ENCODE measurements at regions of chr10 and their contacts with region 1.

Region 1: GRCh38 chr10:100562008-100562711 is 26.4 kb downstream of the HIF1AN start:
- H3K4me3 ChIP-seq: no peak overlapping the region
- H3K27ac ChIP-seq: no peak overlapping the region
- H3K4me1 ChIP-seq: no peaks in the 10 kb centered on the region
- CTCF ChIP-seq: peak; percentile 96

Region 2: DNA sequence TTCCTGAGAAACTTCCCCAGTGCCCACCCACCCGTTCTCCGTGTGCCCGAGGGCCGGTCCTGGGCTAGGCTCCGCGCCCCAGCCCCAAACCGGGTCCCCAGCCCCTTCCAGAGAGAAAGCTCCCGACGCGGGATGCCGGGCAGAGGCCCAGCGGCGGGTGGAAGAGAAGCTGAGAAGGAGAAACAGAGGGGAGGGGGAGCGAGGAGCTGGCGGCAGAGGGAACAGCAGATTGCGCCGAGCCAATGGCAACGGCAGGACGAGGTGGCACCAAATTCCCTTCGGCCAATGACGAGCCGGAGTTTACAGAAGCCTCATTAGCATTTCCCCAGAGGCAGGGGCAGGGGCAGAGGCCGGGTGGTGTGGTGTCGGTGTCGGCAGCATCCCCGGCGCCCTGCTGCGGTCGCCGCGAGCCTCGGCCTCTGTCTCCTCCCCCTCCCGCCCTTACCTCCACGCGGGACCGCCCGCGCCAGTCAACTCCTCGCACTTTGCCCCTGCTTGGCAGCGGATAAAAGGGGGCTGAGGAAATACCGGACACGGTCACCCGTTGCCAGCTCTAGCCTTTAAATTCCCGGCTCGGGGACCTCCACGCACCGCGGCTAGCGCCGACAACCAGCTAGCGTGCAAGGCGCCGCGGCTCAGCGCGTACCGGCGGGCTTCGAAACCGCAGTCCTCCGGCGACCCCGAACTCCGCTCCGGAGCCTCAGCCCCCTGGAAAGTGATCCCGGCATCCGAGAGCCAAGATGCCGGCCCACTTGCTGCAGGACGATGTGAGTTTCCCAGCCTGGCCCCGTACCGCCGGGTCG is 215.2 kb before region 1 on chr10 and contains the start of gene SCD:
- CTCF ChIA-PET with region 1: no interaction called
- POLR2A ChIA-PET with region 1: no interaction called
- H3K4me3 ChIP-seq: peak within 1 kb of the TSS; percentile 77
- H3K27ac ChIP-seq: peak within 1 kb of the TSS; percentile 99
- H3K4me1 ChIP-seq: peaks cover 21% of the 10 kb centered on the region
- CTCF ChIP-seq: no peak

Region 3: DNA sequence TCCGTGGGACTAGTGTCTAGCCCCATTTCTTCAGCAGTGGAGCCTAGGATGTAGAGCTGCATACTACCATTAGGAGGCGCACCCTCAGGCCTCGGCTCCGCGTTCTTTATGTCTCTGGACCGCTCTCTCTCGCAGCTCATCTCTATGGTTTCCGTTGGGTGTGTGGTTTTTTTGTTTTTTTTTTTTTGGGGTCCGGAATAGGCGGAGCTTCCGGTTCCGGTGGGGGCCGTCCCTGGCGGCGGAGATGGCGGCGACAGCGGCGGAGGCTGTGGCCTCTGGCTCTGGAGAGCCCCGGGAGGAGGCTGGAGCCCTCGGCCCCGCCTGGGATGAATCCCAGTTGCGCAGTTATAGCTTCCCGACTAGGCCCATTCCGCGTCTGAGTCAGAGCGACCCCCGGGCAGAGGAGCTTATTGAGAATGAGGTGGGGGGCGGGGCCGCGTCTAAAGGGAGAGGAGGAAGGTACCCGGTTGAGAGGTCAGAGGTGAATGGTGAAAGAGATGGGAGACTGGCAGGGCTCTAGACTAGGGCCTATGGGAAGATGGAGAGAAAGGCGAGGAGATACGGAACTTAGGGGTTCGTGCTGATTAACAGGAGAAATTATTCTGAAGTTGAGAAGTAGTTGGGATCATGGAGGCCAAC is 26.3 kb before region 1 on chr10 and contains the start of gene HIF1AN:
- CTCF ChIA-PET with region 1: interaction called, 16 read pairs
- POLR2A ChIA-PET with region 1: interaction called, 5 read pairs
- H3K4me3 ChIP-seq: peak within 1 kb of the TSS; percentile 79
- H3K27ac ChIP-seq: peak within 1 kb of the TSS; percentile 21; the same call in 1 of the 2 replicates
- H3K4me1 ChIP-seq: peaks cover 15% of the 10 kb centered on the region
- CTCF ChIP-seq: peak; percentile 99

Region 4: DNA sequence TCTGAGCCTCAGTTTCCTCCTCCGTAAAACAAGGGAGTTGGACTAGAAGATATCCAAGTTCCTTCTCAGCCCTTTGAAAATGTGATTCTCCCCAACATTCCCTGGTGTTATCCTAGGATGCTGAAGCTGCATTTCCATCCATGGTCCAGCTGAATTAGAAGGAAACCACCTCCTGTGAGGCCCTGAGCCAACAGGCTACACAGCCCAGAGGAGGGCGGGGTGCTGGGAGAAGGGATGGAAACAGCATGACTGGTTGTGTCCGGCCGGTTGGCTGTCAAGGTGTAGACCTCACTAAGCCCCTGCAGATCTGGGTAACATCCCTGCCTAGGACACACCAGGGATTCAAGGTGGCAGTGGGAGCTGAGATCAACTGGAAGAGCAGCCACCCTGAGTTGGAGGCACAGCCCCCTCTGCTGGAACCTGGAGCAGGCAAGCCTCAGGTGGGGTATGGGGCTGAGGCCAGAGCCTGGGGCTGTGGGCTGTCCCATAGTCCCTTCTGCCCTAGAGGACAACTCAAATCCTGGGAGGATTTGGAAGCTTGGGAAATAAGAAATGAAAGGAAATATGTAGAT is 255.2 kb after region 1 on chr10:
- CTCF ChIA-PET with region 1: interaction called, 35 read pairs
- POLR2A ChIA-PET with region 1: no interaction called
- H3K4me3 ChIP-seq: no peak overlapping the region
- H3K27ac ChIP-seq: no peak overlapping the region
- H3K4me1 ChIP-seq: no peaks in the 10 kb centered on the region
- CTCF ChIP-seq: no peak

Region 5: GRCh38 chr10:100866575-100867098 is 304.5 kb after region 1 on chr10:
- CTCF ChIA-PET with region 1: interaction called, 197 read pairs
- POLR2A ChIA-PET with region 1: no interaction called
- H3K4me3 ChIP-seq: no peak overlapping the region
- H3K27ac ChIP-seq: no peak overlapping the region
- H3K4me1 ChIP-seq: no peaks in the 10 kb centered on the region; the same call in 1 of the 2 replicates
- CTCF ChIP-seq: no peak